AG04450 (cell line): ENCODE measurements at regions of chr6 and their contacts with region 1.

Region 1: DNA sequence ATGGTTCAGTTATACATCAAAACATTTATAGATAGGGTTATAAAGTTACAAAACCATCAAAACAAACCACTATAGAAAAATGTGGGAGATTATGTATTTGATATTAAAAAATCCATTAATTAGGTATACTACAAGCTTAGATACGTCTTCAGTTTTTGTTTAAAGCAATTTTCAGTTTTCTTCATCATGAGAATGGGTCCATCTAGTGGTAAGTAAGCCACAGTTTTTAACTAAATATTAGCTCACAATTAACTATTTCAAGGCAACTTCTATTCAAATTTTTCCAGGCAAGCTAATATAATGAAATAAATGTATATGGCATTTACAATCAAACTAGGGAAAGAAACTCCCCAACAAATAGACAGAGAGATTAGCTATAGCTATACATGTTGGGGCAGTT is 44.4 kb downstream of the RNGTT start:
- DNase-seq: no peak
- H3K4me3 ChIP-seq: no peak overlapping the region
- H3K27ac ChIP-seq: no peak overlapping the region
- H3K27me3 ChIP-seq: no peaks in the 10 kb centered on the region
- CTCF ChIP-seq: peak; percentile 33

Region 2: GRCh38 chr6:88899569-88900316 is 19.3 kb before region 1 on chr6:
- CTCF ChIA-PET with region 1: interaction called, 16 read pairs
- POLR2A ChIA-PET with region 1: no interaction called
- DNase-seq: no peak
- H3K4me3 ChIP-seq: no peak overlapping the region
- H3K27ac ChIP-seq: no peak overlapping the region
- H3K27me3 ChIP-seq: no peaks in the 10 kb centered on the region
- CTCF ChIP-seq: peak; percentile 27; the same call in 1 of the 2 replicates

Region 3: GRCh38 chr6:88908598-88909548 is 10.2 kb before region 1 on chr6:
- CTCF ChIA-PET with region 1: interaction called, 13 read pairs
- POLR2A ChIA-PET with region 1: no interaction called
- DNase-seq: no peak
- H3K4me3 ChIP-seq: no peak overlapping the region
- H3K27ac ChIP-seq: no peak overlapping the region
- H3K27me3 ChIP-seq: no peaks in the 10 kb centered on the region
- CTCF ChIP-seq: no peak

Region 4: DNA sequence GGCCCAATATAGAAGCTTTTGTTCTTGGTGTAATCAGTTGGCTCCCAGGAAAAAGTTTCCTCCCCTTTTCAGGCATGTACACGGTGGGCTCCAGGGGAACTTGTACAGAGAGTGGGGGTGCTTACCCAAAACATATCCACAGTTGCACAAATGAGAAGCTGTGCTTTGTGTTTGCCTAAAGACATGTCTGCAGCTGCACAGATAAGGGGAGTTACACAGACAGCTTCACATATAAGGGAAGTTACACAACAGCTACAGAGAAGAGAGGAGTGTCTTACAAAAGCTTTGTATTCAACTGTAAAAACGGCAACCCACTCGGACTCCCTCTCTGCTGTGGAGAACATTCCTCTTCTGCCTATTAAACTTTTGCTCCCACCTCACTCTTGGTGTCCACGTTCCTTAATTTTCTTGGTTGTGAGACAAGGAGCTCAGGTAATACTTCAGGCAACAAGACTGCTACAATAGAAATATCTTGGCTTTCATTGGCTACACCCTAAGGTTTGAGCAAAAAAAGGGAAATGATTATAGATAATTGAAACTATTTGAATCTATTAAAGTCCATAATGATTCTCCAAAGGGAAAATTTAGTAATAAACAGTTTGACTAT is 154.1 kb after region 1 on chr6:
- CTCF ChIA-PET with region 1: no interaction called
- POLR2A ChIA-PET with region 1: no interaction called
- DNase-seq: no peak
- H3K4me3 ChIP-seq: no peak overlapping the region
- H3K27ac ChIP-seq: no peak overlapping the region
- H3K27me3 ChIP-seq: peaks cover 3% of the 10 kb centered on the region
- CTCF ChIP-seq: no peak